ENCODE measurements at regions of chr15 and their contacts with region 1.

Region 1: DNA sequence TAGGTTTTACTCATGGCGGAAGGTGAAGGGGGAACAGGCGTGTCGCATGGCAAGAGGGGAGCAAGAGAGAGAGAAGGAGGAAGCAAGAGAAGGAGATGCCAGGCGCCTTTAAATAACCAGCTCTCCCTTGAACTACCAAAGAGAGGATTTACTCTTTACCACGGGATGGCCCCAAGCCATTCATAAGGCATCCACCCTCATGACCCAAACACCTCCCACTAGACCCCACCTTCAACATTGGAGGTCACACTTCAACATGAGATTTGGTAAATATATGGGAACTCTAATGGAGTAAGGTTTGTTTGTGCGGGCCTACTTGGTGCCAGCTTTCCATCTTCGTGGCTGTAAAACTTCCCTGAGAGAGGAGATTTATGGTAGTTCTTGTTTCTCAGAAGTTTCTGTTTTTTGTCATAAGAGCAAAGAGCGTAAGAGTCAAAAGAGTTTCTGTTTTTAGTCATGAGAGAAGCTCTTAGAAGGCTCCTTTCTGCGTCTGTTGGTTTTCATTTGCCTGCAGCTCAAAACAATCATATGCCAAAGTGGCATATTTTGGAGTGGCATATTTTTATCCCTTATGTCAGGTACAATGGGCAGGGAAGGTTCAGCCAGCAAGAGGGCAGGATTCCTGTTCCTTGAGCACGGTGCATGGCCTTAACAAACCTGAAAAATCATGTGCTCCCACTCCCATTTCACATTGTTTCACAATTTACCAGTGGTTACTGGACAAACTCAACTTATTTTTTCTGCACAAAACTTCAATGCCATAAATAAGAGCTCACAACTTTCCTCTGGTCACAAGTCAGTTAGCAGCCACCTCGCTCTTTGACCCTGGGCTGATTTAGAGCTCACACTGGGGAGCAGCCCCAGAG is 12.5 kb downstream of the PML start:
- DNase-seq: no peak
- ATAC-seq: peak in 1 of 4 experiments; percentile 39
- H3K4me3 ChIP-seq: peak overlapping the region in 1 of 2 donors; percentile 18
- H3K4me3 Mint-ChIP-seq: peak overlapping the region; percentile 61 to 68 (median 66)
- H3K27ac ChIP-seq: peak overlapping the region; percentile 14
- H3K27ac Mint-ChIP-seq: peak overlapping the region; percentile 91 to 96
- H3K4me1 ChIP-seq: peaks cover 19 to 45% of the 10 kb centered on the region in 2 experiments
- H3K4me1 Mint-ChIP-seq: peaks cover 65 to 67% (median 67%) of the 10 kb centered on the region in 3 donors
- H3K27me3 ChIP-seq: no peaks in the 10 kb centered on the region
- H3K27me3 Mint-ChIP-seq: no peaks in the 10 kb centered on the region

Region 2: GRCh38 chr15:73936181-73936580 is 70.8 kb before region 1 on chr15:
- CTCF ChIA-PET with region 1: no interaction called
- POLR2A ChIA-PET with region 1: no interaction called
- DNase-seq: no peak
- ATAC-seq: no peak
- H3K4me3 ChIP-seq: no peak overlapping the region
- H3K4me3 Mint-ChIP-seq: no peak overlapping the region
- H3K27ac ChIP-seq: no peak overlapping the region
- H3K27ac Mint-ChIP-seq: peak overlapping the region in 1 of 2 donors; percentile 2
- H3K4me1 ChIP-seq: peaks cover 0 to 8% of the 10 kb centered on the region in 2 experiments
- H3K4me1 Mint-ChIP-seq: peaks cover 8 to 40% (median 15%) of the 10 kb centered on the region in 3 donors
- H3K27me3 ChIP-seq: peaks cover 0 to 7% of the 10 kb centered on the region in 2 experiments
- H3K27me3 Mint-ChIP-seq: no peaks in the 10 kb centered on the region

Region 3: DNA sequence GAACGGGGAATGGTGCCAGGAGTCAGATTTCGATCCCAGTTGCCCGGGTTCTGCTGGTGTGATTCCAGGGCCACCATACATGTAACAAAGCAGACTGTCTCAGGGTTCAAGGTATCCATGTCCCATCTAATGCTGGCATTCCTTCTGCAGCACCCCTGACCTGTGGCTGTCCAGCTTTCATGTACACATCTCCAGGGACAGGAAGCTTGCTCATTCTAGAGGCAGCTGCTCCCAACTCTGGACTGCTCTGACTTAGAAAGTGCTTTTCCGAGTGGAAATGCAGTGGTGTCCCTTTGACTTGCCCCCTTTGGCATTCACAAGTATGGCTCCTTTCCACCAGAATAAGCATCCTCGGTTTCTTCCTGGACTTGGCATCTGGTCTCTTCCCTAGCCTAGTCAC is 18.4 kb after region 1 on chr15:
- CTCF ChIA-PET with region 1: no interaction called
- POLR2A ChIA-PET with region 1: no interaction called
- DNase-seq: no peak
- ATAC-seq: no peak
- H3K4me3 ChIP-seq: no peak overlapping the region
- H3K4me3 Mint-ChIP-seq: no peak overlapping the region
- H3K27ac ChIP-seq: no peak overlapping the region
- H3K27ac Mint-ChIP-seq: no peak overlapping the region
- H3K4me1 ChIP-seq: no peaks in the 10 kb centered on the region
- H3K4me1 Mint-ChIP-seq: peaks cover 6 to 10% (median 8%) of the 10 kb centered on the region in 3 donors
- H3K27me3 ChIP-seq: no peaks in the 10 kb centered on the region
- H3K27me3 Mint-ChIP-seq: no peaks in the 10 kb centered on the region

Region 4: GRCh38 chr15:75862796-75863195 is 1855.8 kb after region 1 on chr15:
- CTCF ChIA-PET with region 1: no interaction called
- POLR2A ChIA-PET with region 1: interaction called in 1 of 2 experiments, 14 read pairs
- DNase-seq: no peak
- ATAC-seq: no peak
- H3K4me3 ChIP-seq: no peak overlapping the region
- H3K4me3 Mint-ChIP-seq: no peak overlapping the region
- H3K27ac ChIP-seq: no peak overlapping the region
- H3K27ac Mint-ChIP-seq: no peak overlapping the region
- H3K4me1 ChIP-seq: peaks cover 0 to 5% of the 10 kb centered on the region in 2 experiments
- H3K4me1 Mint-ChIP-seq: peaks cover 53 to 67% (median 60%) of the 10 kb centered on the region in 3 donors
- H3K27me3 ChIP-seq: no peaks in the 10 kb centered on the region
- H3K27me3 Mint-ChIP-seq: no peaks in the 10 kb centered on the region

Measured in T-cell (primary cell).